Activated T-helper 1 cell treated with anti-CD3 and anti-CD28 coated beads, Interleukin-12 subunit alpha, Interleukin-12 subunit beta, Interleukin-2, Interleukin-4 antibody, amounts not matched to agents 30 ng/mL and 10 ng/mL and 1 ng/mL, durations not matched to agents 14 hours and 24 hours and 36 hours (primary cell): ENCODE measurements at regions of chr6 and their contacts with region 1.

Region 1: DNA sequence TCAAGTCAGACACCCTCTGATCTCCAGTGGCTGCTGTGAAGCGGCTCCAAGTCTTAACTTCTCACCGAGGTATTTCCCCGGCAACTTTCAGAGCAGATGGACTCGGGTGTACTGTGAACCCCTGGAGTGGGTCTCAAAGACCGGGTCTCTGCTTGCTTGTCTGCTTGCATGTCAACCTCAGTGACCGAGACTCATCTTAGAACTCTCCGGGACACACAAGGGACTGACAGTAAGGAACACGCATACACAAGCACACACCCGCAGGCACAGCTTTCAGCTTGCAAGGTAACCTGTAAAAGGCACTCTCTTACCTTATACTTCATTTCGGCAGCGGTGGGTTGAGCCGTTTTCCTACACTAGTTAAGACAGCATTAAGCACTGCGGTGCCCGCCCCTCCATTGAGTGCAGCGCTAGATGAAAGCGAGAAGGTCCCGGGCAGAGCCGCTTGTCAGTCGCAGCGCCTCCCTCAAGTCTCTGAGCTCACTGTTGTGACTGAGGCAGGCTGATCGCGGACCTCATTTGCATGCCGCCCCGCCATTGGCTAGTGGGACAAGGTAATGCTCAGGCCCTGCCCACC is at the start of gene NEDD9:
- DNase-seq: peak; percentile 93
- H3K4me3 Mint-ChIP-seq: peak within 1 kb of the TSS; percentile 98
- H3K27ac Mint-ChIP-seq: peak within 1 kb of the TSS; percentile 96
- H3K4me1 Mint-ChIP-seq: peaks cover 86% of the 10 kb centered on the region
- H3K27me3 Mint-ChIP-seq: no peaks in the 10 kb centered on the region
- total RNA-seq, gene NEDD9: 53.2 and 62.1 TPM in 2 replicates

Region 2: GRCh38 chr6:11093589-11094410 is 138.5 kb before region 1 on chr6 and contains the start of gene SMIM13:
- intact Hi-C with region 1: loop called (anchors 2 kb)
- DNase-seq: peak; percentile 94
- H3K4me3 Mint-ChIP-seq: peak within 1 kb of the TSS; percentile 92
- H3K27ac Mint-ChIP-seq: peak within 1 kb of the TSS; percentile 97
- H3K4me1 Mint-ChIP-seq: peaks cover 31% of the 10 kb centered on the region
- H3K27me3 Mint-ChIP-seq: no peaks in the 10 kb centered on the region
- total RNA-seq, gene SMIM13: 14.6 and 18.4 TPM in 2 replicates

Region 3: DNA sequence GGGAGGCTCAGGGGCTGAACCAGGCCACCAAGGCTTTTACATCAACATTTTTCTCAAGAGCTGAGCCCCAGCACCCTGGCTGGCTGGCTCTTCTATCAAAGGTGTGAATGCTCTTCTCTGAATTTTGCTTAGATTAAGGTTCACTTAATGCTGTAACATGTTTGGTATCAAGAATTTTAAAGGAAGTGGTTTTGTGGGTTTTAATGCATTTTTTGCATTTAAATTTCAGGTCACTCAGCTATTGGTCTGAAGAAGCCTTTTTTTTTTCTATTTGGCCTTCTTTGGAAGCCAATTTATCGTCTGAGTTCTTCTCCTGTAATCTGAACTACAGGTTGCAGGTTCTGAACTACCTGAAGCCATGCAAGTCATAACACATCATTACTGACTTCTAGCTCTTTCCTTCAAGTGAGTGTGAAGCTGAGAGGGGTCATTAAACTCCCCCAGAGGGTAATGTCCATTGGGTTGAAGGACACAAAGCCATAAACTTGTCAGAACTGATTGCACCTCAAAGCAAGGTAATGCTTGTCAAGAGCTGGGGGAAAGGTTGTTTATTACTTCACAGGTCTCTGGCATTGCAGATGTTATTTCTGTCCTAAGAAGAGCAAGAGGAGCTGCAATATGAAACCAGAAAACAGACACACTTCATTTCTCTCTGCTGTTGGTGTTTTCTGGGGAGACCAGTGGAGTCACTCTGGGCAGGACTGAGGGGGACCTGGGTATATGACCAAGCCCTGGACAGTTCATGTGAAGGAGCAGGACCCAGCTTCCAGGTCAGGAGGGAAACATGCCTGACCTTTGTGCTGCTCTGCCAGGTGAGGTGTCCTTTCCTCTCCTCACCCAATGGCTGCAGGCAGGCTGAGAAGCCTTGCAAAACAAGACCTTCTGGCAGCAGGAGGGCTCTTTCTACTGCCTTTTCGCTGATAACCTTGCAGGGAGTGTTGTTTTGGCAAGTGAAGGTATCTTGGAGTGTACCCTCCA is 26.3 kb after region 1 on chr6:
- intact Hi-C with region 1: loop called (anchors 1 kb)
- DNase-seq: no peak
- H3K4me3 Mint-ChIP-seq: peak overlapping the region; percentile 8
- H3K27ac Mint-ChIP-seq: peak overlapping the region; percentile 65
- H3K4me1 Mint-ChIP-seq: peaks cover 57% of the 10 kb centered on the region
- H3K27me3 Mint-ChIP-seq: no peaks in the 10 kb centered on the region

Region 4: GRCh38 chr6:11324453-11325015 is 92.3 kb after region 1 on chr6:
- intact Hi-C with region 1: loop called (anchors 1 kb)
- DNase-seq: peak; percentile 54
- H3K4me3 Mint-ChIP-seq: peak overlapping the region; percentile 65
- H3K27ac Mint-ChIP-seq: peak overlapping the region; percentile 97
- H3K4me1 Mint-ChIP-seq: peaks cover 91% of the 10 kb centered on the region
- H3K27me3 Mint-ChIP-seq: no peaks in the 10 kb centered on the region

Region 5: GRCh38 chr6:11381801-11382513 is 149.7 kb after region 1 on chr6:
- intact Hi-C with region 1: loop called (anchors 1 kb)
- DNase-seq: peak; percentile 69
- H3K4me3 Mint-ChIP-seq: peak overlapping the region; percentile 92
- H3K27ac Mint-ChIP-seq: peak overlapping the region; percentile 96
- H3K4me1 Mint-ChIP-seq: peaks cover 75% of the 10 kb centered on the region
- H3K27me3 Mint-ChIP-seq: no peaks in the 10 kb centered on the region

Region 6: GRCh38 chr6:11537229-11538051 is 305.2 kb after region 1 on chr6 and contains the start of gene TMEM170B:
- intact Hi-C with region 1: loop called (anchors 1 kb)
- DNase-seq: peak; percentile 90
- H3K4me3 Mint-ChIP-seq: peak within 1 kb of the TSS; percentile 84
- H3K27ac Mint-ChIP-seq: peak within 1 kb of the TSS; percentile 68
- H3K4me1 Mint-ChIP-seq: peaks cover 17% of the 10 kb centered on the region
- H3K27me3 Mint-ChIP-seq: peaks cover 62% of the 10 kb centered on the region
- total RNA-seq, gene TMEM170B: 0.78 and 0.86 TPM in 2 replicates